ENCODE measurements at regions of chr12 and their contacts with region 1.

Region 1: GRCh38 chr12:63668028-63668799 is at the start of gene DPY19L2:
- DNase-seq: no peak
- ATAC-seq: peak; percentile 89
- H3K4me3 ChIP-seq: peak within 1 kb of the TSS; percentile 55; the same call in 1 of the 2 replicates
- H3K27ac ChIP-seq: no peak within 1 kb of the TSS
- H3K4me1 ChIP-seq: no peaks in the 10 kb centered on the region
- H3K27me3 ChIP-seq: peaks cover 0 to 5% of the 10 kb centered on the region in 2 experiments; a peak in 2 of 4 replicates
- CTCF ChIP-seq: no peak
- EP300 ChIP-seq: no peak
- POLR2A ChIP-seq: no peak
- RAD21 ChIP-seq: no peak
- polyA plus RNA-seq, gene DPY19L2: not detected

Region 2: GRCh38 chr12:63294327-63294632 is 373.9 kb before region 1 on chr12:
- CTCF ChIA-PET with region 1: no interaction called
- POLR2A ChIA-PET with region 1: no interaction called
- RAD21 ChIA-PET with region 1: no interaction called
- SMC1A ChIA-PET with region 1: no interaction called
- in situ Hi-C with region 1: no loop called
- intact Hi-C with region 1: no loop called
- DNase-seq: no peak
- ATAC-seq: peak; percentile 80
- H3K4me3 ChIP-seq: no peak overlapping the region
- H3K27ac ChIP-seq: no peak overlapping the region
- H3K4me1 ChIP-seq: no peaks in the 10 kb centered on the region
- H3K27me3 ChIP-seq: no peaks in the 10 kb centered on the region
- CTCF ChIP-seq: no peak
- EP300 ChIP-seq: no peak
- POLR2A ChIP-seq: no peak
- RAD21 ChIP-seq: no peak

Region 3: DNA sequence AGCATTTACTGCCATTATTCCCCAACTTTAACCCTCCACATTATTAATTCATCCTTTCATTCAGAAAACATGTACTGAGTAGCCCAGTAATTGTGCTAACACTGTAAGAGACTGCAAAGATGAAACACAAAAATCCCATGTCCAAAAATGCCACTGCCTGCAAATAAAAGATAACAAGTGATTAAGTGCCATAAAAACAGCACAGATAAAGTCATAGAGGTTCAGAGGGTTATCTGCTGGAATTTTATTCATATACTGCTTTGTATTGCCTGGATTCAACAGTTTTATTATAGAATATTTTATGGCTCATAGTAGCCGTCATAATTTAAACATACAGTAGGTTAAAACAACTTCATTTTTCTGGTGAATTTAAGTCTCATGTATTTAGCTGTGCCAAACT is 376.0 kb after region 1 on chr12:
- CTCF ChIA-PET with region 1: no interaction called
- POLR2A ChIA-PET with region 1: no interaction called
- RAD21 ChIA-PET with region 1: no interaction called
- SMC1A ChIA-PET with region 1: no interaction called
- in situ Hi-C with region 1: no loop called
- intact Hi-C with region 1: no loop called
- DNase-seq: no peak
- ATAC-seq: no peak
- H3K4me3 ChIP-seq: no peak overlapping the region
- H3K27ac ChIP-seq: no peak overlapping the region
- H3K4me1 ChIP-seq: no peaks in the 10 kb centered on the region
- H3K27me3 ChIP-seq: no peaks in the 10 kb centered on the region
- CTCF ChIP-seq: no peak
- EP300 ChIP-seq: no peak
- POLR2A ChIP-seq: no peak
- RAD21 ChIP-seq: no peak

Region 4: GRCh38 chr12:64273527-64274403 is 605.6 kb after region 1 on chr12:
- CTCF ChIA-PET with region 1: no interaction called
- POLR2A ChIA-PET with region 1: no interaction called
- RAD21 ChIA-PET with region 1: no interaction called
- SMC1A ChIA-PET with region 1: no interaction called
- in situ Hi-C with region 1: loop called (anchors 10 kb)
- intact Hi-C with region 1: no loop called
- DNase-seq: no peak
- ATAC-seq: peak; percentile 91
- H3K4me3 ChIP-seq: no peak overlapping the region
- H3K27ac ChIP-seq: no peak overlapping the region
- H3K4me1 ChIP-seq: no peaks in the 10 kb centered on the region
- H3K27me3 ChIP-seq: no peaks in the 10 kb centered on the region; a peak in 1 of 4 replicates
- CTCF ChIP-seq: peak; percentile 36 to 64 (median 51); a peak in 4 of 6 replicates
- EP300 ChIP-seq: no peak
- POLR2A ChIP-seq: no peak
- RAD21 ChIP-seq: peak; percentile 79